Ovary (tissue), 10 donors: ENCODE measurements at regions of chr1 and their contacts with region 1.

Region 1: GRCh38 chr1:87186346-87186745 is 142.3 kb upstream of the LMO4 start:
- DNase-seq: no peak
- H3K4me3 ChIP-seq: no peak overlapping the region
- H3K27ac ChIP-seq: no peak overlapping the region
- H3K4me1 ChIP-seq: no peaks in the 10 kb centered on the region
- H3K27me3 ChIP-seq: no peaks in the 10 kb centered on the region
- CTCF ChIP-seq: no peak
- EP300 ChIP-seq: no peak
- POLR2A ChIP-seq: no peak

Region 2: GRCh38 chr1:85628791-85629531 is 1557.4 kb before region 1 on chr1:
- intact Hi-C with region 1: loop called in 1 of 4 experiments (anchors 5 kb)
- DNase-seq: no peak
- H3K4me3 ChIP-seq: no peak overlapping the region
- H3K27ac ChIP-seq: no peak overlapping the region
- H3K4me1 ChIP-seq: no peaks in the 10 kb centered on the region
- H3K27me3 ChIP-seq: no peaks in the 10 kb centered on the region
- CTCF ChIP-seq: no peak
- EP300 ChIP-seq: no peak
- POLR2A ChIP-seq: no peak